ENCODE measurements at regions of chr9 and their contacts with region 1.

Region 1: DNA sequence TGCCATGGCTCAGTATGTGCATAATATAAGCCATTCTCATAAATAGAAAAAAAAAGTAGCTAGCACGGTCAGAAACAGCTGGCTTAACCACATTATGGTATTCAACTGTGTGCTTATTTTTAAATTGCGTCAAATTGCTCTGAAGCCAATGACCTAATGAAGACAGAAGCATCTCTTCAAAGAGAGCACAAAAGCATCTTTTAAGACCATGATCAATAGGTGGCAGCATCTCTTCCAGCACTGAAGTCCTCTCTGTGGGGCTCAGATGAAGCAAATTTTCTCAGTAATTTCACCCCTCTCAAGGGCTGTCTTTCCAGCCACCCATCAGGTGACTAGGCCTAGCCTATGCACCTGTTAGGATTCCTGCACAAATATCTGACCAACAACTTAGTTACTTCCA is 251.4 kb downstream of the GLIS3 start:
- DNase-seq: peak in 1 of 9 experiments; percentile 3
- ATAC-seq: no peak
- H3K4me3 ChIP-seq: no peak overlapping the region
- H3K4me3 Mint-ChIP-seq: no peak overlapping the region
- H3K27ac ChIP-seq: no peak overlapping the region
- H3K27ac Mint-ChIP-seq: no peak overlapping the region
- H3K4me1 ChIP-seq: no peaks in the 10 kb centered on the region
- H3K4me1 Mint-ChIP-seq: no peaks in the 10 kb centered on the region
- H3K27me3 ChIP-seq: no peaks in the 10 kb centered on the region
- H3K27me3 Mint-ChIP-seq: peaks cover 9% of the 10 kb centered on the region
- CTCF ChIP-seq: no peak

Region 2: DNA sequence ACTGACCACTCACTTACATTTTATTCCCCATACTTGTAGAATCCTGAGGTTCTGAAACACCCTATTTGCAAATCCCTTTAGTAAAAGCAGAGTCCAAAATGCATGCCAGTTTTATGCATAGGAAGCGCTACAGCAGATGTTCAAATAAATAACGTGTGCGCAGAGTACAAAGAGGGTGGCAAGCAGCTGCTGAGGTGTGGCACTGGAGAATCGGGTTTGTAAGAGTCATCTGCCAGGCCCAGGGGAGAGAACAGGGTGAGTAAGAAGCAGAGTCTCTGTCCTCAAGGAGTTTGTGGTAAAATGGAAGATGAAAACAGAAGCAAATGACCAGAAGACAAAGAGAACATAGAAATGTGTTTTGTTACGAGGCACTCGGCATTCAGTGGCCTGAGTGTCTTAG is 37.4 kb before region 1 on chr9:
- CTCF ChIA-PET with region 1: no interaction called
- POLR2A ChIA-PET with region 1: no interaction called
- intact Hi-C with region 1: loop called in 1 of 2 experiments (anchors 5 kb)
- DNase-seq: no peak
- ATAC-seq: no peak
- H3K4me3 ChIP-seq: no peak overlapping the region
- H3K4me3 Mint-ChIP-seq: no peak overlapping the region
- H3K27ac ChIP-seq: no peak overlapping the region
- H3K27ac Mint-ChIP-seq: no peak overlapping the region
- H3K4me1 ChIP-seq: no peaks in the 10 kb centered on the region
- H3K4me1 Mint-ChIP-seq: no peaks in the 10 kb centered on the region
- H3K27me3 ChIP-seq: no peaks in the 10 kb centered on the region
- H3K27me3 Mint-ChIP-seq: peaks cover 5% of the 10 kb centered on the region
- CTCF ChIP-seq: no peak

Region 3: DNA sequence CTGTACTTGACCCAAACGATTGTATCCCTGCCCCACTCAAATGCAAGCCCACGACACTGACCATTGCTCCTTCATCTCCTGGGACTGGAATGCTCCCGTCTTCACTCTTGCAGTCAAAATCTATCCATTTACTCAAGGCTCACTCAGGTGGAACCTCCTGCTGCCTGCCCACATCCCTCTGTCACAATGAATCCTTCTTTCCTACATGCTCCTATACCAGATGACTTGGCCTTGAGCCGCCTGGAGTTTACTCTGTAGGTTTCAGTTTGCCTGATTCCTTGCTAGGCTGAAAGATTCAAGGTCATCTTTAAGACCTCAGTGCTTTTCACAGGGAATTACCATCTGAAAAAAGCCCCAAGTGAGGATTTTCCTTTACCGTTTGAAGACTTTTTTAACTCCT is 12.7 kb before region 1 on chr9:
- CTCF ChIA-PET with region 1: no interaction called
- POLR2A ChIA-PET with region 1: no interaction called
- intact Hi-C with region 1: loop called in 1 of 2 experiments (anchors 1 kb)
- DNase-seq: no peak
- ATAC-seq: no peak
- H3K4me3 ChIP-seq: no peak overlapping the region
- H3K4me3 Mint-ChIP-seq: no peak overlapping the region
- H3K27ac ChIP-seq: no peak overlapping the region
- H3K27ac Mint-ChIP-seq: no peak overlapping the region
- H3K4me1 ChIP-seq: no peaks in the 10 kb centered on the region
- H3K4me1 Mint-ChIP-seq: no peaks in the 10 kb centered on the region
- H3K27me3 ChIP-seq: no peaks in the 10 kb centered on the region
- H3K27me3 Mint-ChIP-seq: no peaks in the 10 kb centered on the region
- CTCF ChIP-seq: no peak